ENCODE measurements at regions of chr1 and their contacts with region 1.

Region 1: GRCh38 chr1:2205191-2205952 is 10.8 kb upstream of the FAAP20 start:
- DNase-seq: peak; percentile 86
- ATAC-seq: peak; percentile 93
- H3K4me3 Mint-ChIP-seq: peak overlapping the region; percentile 72
- H3K27ac Mint-ChIP-seq: no peak overlapping the region
- H3K4me1 Mint-ChIP-seq: peaks cover 29% of the 10 kb centered on the region
- H3K27me3 Mint-ChIP-seq: no peaks in the 10 kb centered on the region
- CTCF ChIP-seq: no peak

Region 2: GRCh38 chr1:1919304-1920056 is 285.9 kb before region 1 on chr1:
- CTCF ChIA-PET with region 1: no interaction called
- POLR2A ChIA-PET with region 1: no interaction called
- intact Hi-C with region 1: loop called (anchors 2 kb)
- DNase-seq: peak; percentile 100
- ATAC-seq: peak; percentile 90
- H3K4me3 Mint-ChIP-seq: peak overlapping the region; percentile 73
- H3K27ac Mint-ChIP-seq: peak overlapping the region; percentile 56
- H3K4me1 Mint-ChIP-seq: no peaks in the 10 kb centered on the region
- H3K27me3 Mint-ChIP-seq: no peaks in the 10 kb centered on the region
- CTCF ChIP-seq: no peak

Region 3: GRCh38 chr1:2227346-2228153 is 22.2 kb after region 1 on chr1:
- CTCF ChIA-PET with region 1: interaction called, 3 read pairs
- POLR2A ChIA-PET with region 1: interaction called, 46 read pairs
- intact Hi-C with region 1: loop called (anchors 1 kb)
- DNase-seq: peak; percentile 98
- ATAC-seq: peak; percentile 93
- H3K4me3 Mint-ChIP-seq: peak overlapping the region; percentile 76
- H3K27ac Mint-ChIP-seq: peak overlapping the region; percentile 56
- H3K4me1 Mint-ChIP-seq: peaks cover 37% of the 10 kb centered on the region
- H3K27me3 Mint-ChIP-seq: no peaks in the 10 kb centered on the region
- CTCF ChIP-seq: no peak

Region 4: DNA sequence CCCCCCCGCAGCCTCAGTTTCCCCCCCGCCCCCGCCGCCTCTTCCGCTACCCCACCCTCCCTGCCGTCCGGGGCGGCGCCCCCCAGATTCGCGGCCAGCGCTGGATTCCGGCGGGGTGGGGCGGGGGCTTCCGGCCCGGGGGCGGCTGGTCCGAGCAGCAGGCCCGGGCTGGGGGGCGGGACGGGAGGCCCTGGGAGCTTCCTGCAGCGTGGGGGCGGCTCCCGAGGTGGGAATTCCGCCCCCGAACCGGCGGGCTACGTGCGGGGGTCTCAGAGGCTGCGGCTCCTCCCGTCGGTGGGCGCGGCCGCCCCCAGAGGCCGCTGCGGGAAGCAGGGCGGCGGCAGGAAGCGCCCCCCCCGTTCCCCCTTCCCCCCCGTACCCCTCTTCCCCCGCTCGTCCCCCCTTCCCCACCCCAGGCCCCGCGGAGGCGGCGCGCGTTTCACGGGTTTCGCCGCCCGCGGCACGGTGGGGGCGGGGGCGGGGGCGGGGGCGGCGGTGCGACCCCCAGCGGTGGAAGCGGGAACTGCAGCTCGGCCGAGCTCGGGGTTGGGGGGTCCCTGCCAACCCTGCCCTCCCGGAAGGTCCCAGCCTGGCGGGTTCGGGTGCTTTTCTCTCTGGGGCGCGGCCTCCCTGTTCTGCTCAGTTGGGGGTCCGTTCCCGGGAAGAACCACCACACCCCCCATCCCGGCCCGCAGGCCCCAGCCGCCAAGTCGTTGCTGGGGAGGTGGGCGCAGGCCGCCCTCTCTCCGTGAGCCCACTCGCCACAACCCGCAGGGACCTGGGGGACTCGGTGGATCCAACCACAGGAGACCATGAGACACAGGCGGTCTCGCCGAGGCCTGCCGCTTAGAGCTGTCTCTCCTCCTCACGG is 109.7 kb after region 1 on chr1:
- CTCF ChIA-PET with region 1: interaction called, 3 read pairs
- POLR2A ChIA-PET with region 1: interaction called, 9 read pairs
- intact Hi-C with region 1: loop called (anchors 2 kb)
- DNase-seq: peak; percentile 78
- ATAC-seq: peak; percentile 58
- H3K4me3 Mint-ChIP-seq: peak overlapping the region; percentile 66
- H3K27ac Mint-ChIP-seq: peak overlapping the region; percentile 18
- H3K4me1 Mint-ChIP-seq: peaks cover 37% of the 10 kb centered on the region
- H3K27me3 Mint-ChIP-seq: no peaks in the 10 kb centered on the region
- CTCF ChIP-seq: peak; percentile 83

Region 5: DNA sequence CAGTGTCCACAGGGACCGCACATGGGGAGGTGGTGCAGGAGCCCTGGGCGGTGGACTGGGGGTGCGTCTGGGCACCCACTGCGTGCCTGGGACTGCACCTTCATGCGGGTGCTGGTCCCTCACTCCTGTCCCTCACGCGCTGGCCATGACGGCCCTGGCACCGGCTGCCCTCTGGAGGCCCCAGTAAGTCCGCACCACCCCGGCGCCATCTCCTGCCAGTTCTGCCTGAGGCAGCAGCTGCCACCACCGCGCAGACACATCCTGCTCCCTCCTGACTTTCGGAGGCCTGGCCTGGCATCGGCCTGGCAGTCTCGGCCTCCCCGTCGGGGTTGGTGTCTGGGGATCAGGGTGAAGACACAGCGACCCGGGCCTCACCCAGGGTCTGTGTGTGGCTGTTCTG is 121.2 kb after region 1 on chr1:
- CTCF ChIA-PET with region 1: no interaction called
- POLR2A ChIA-PET with region 1: no interaction called
- intact Hi-C with region 1: no loop called
- DNase-seq: no peak
- ATAC-seq: no peak
- H3K4me3 Mint-ChIP-seq: no peak overlapping the region
- H3K27ac Mint-ChIP-seq: no peak overlapping the region
- H3K4me1 Mint-ChIP-seq: no peaks in the 10 kb centered on the region
- H3K27me3 Mint-ChIP-seq: no peaks in the 10 kb centered on the region
- CTCF ChIP-seq: no peak

Region 6: GRCh38 chr1:2412519-2413233 is 207.3 kb after region 1 on chr1 and contains the start of gene PEX10:
- CTCF ChIA-PET with region 1: no interaction called
- POLR2A ChIA-PET with region 1: interaction called, 4 read pairs
- intact Hi-C with region 1: loop called (anchors 2 kb)
- DNase-seq: peak; percentile 100
- ATAC-seq: peak; percentile 93
- H3K4me3 Mint-ChIP-seq: peak within 1 kb of the TSS; percentile 83
- H3K27ac Mint-ChIP-seq: peak within 1 kb of the TSS; percentile 71
- H3K4me1 Mint-ChIP-seq: peaks cover 45% of the 10 kb centered on the region
- H3K27me3 Mint-ChIP-seq: no peaks in the 10 kb centered on the region
- CTCF ChIP-seq: no peak
- total RNA-seq, gene PEX10: 17.4 and 18.9 TPM in 2 replicates